KBM-7 (cell line): ENCODE measurements at regions of chr4 and their contacts with region 1.

Region 1: DNA sequence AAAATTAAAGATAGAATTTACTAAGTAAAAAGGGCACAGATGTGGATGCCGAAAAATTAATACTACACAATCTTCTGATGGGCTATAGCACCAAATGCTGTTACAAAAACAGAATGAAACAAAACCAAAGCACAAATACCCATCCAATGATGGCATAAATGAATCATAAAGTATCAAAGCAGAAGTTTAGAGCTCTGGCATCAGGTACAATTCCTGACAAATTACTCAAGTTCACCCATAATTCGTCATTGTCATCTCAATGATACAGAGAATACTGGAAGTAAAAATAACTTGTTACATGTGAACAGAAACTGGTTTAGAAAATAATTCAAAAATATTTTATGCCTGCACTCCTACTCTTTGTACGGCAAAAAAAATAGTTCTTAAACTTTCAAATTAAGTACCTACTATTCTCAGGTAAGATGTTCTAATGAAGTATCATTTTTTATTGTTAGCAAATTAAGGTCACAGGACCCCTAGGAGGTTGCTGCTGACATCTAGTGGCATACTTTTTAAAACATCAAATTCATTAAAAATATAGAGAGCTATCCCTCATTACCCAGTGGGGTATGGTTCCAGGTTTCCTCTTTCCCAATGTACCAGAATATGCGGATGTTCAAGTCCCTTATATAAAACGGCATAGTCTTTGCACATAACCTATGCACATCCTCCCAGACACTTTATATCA is 126.1 kb downstream of the INPP4B start:
- DNase-seq: peak; percentile 64

Region 2: DNA sequence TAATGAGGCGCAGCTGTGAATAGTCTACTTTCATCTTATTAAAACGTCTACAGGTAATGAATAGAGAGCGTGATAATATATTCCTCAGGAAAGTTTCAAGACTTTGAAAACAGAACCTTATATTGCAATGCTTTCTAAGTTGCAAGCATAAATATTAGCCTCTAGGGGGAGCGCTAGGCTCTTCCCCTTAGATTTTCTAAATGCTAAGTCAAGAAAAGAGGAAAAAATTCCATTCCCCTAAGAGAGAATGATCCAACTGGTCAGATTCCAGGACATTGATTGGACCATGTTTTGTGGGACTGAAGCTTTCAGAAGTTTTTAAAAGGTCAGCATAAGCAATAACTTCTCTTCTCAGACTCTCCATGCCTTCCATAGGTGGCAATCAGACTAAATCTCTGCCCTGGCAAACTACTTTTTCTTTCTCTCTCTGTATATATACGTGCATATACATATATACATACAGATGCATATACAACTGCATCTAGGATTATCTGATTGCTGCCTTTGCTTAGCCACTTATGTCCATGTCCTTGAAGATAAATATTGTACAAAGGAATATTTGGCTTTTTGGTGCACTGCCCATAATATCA is 366.8 kb before region 1 on chr4:
- in situ Hi-C with region 1: loop called (anchors 25 kb)
- DNase-seq: peak; percentile 52

Region 3: DNA sequence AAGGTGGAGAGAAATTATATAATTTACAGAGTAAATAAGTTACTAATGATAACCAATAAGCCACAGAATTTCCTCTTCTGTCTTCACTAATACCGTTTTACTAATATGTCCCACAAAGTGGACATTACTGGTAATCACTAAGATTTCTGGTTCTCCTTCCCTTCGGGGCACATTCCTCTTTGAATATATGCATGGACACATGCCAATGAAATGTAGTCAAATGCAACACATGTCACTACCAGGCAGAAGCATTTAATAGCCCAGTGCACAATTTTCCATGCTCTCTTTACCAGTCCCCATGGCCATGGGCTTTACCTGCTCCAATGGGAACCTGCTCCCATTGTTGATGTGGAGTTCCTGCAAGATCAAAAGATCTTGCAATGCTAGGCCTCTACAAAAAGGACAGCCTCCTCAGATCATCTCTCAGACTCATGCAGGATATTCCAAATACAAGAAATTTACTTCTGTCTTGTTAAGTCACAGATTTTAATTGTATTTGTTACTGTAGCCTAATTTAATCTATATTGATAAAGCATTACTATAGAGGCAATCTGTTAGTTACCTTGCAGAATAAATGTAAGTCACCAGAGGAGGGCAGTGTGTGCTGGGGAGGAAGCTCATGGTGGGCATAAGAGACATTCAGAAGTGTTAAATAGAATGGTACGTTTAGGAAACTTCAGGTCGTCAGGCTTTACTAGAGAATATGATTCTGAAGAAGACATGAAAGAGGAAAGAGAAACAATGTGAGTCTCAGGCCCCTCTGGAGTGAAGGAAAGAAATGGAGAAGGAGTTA is 163.2 kb after region 1 on chr4:
- in situ Hi-C with region 1: no loop called
- DNase-seq: peak; percentile 27